ENCODE measurements at regions of chr2 and their contacts with region 1.

Region 1: DNA sequence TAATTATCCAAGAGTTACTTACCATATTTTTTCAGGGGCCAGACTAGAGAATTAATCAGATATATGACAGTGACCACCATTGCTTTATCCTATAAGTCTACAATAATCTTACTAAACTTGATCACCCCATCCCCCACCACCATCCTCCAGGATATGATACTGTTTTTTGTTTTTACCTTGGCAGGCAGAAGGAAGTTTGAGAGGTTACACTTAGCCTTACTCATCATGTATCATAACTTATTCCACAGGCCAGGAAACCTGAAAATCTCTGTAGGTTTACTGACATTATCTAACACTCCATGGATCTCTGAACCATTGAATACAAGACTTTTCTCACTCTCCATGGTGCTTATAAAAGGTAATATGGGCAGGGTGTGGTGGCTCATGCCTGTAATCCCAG is 602.7 kb downstream of the KCNJ3 start:
- DNase-seq: no peak
- ATAC-seq: no peak
- H3K4me3 ChIP-seq: no peak overlapping the region
- H3K4me3 Mint-ChIP-seq: no peak overlapping the region
- H3K27ac ChIP-seq: no peak overlapping the region
- H3K27ac Mint-ChIP-seq: no peak overlapping the region
- H3K4me1 ChIP-seq: no peaks in the 10 kb centered on the region
- H3K4me1 Mint-ChIP-seq: no peaks in the 10 kb centered on the region
- H3K27me3 ChIP-seq: no peaks in the 10 kb centered on the region
- H3K27me3 Mint-ChIP-seq: no peaks in the 10 kb centered on the region
- CTCF ChIP-seq: no peak

Region 2: GRCh38 chr2:155281921-155282320 is 19.3 kb before region 1 on chr2:
- CTCF ChIA-PET with region 1: no interaction called
- POLR2A ChIA-PET with region 1: no interaction called
- intact Hi-C with region 1: loop called in 1 of 2 experiments (anchors 1 kb)
- DNase-seq: no peak
- ATAC-seq: no peak
- H3K4me3 ChIP-seq: no peak overlapping the region
- H3K4me3 Mint-ChIP-seq: no peak overlapping the region
- H3K27ac ChIP-seq: no peak overlapping the region
- H3K27ac Mint-ChIP-seq: no peak overlapping the region
- H3K4me1 ChIP-seq: no peaks in the 10 kb centered on the region
- H3K4me1 Mint-ChIP-seq: no peaks in the 10 kb centered on the region
- H3K27me3 ChIP-seq: no peaks in the 10 kb centered on the region
- H3K27me3 Mint-ChIP-seq: no peaks in the 10 kb centered on the region
- CTCF ChIP-seq: no peak

Measured in CD8-positive, alpha-beta T cell (primary cell).